ENCODE measurements at regions of chr15 and their contacts with region 1.

Region 1: GRCh38 chr15:47196057-47196456 is 521.2 kb upstream of the SEMA6D start:
- ATAC-seq: peak; percentile 95 to 99 (median 98)
- H3K4me3 ChIP-seq: no peak overlapping the region
- H3K27ac ChIP-seq: no peak overlapping the region
- H3K4me1 ChIP-seq: peaks cover 2 to 15% of the 10 kb centered on the region in 2 donors

Region 2: GRCh38 chr15:45705510-45706473 is 1490.3 kb before region 1 on chr15:
- in situ Hi-C with region 1: loop called in 1 of 9 experiments (anchors 25 kb)
- ATAC-seq: peak; percentile 74 to 92 (median 79)
- H3K4me3 ChIP-seq: peak overlapping the region; percentile 39 to 67 (median 44)
- H3K27ac ChIP-seq: no peak overlapping the region
- H3K4me1 ChIP-seq: no peaks in the 10 kb centered on the region

Region 3: GRCh38 chr15:46312133-46312740 is 883.8 kb before region 1 on chr15:
- in situ Hi-C with region 1: loop called in 2 of 9 experiments (anchors 25 kb)
- ATAC-seq: peak; percentile 80 to 94 (median 88)
- H3K4me3 ChIP-seq: no peak overlapping the region
- H3K27ac ChIP-seq: no peak overlapping the region
- H3K4me1 ChIP-seq: peaks cover 17 to 28% of the 10 kb centered on the region in 2 donors

Region 4: GRCh38 chr15:47484059-47484458 is 288.0 kb after region 1 on chr15:
- in situ Hi-C with region 1: no loop called
- ATAC-seq: no peak
- H3K4me3 ChIP-seq: no peak overlapping the region
- H3K27ac ChIP-seq: no peak overlapping the region
- H3K4me1 ChIP-seq: no peaks in the 10 kb centered on the region

Region 5: DNA sequence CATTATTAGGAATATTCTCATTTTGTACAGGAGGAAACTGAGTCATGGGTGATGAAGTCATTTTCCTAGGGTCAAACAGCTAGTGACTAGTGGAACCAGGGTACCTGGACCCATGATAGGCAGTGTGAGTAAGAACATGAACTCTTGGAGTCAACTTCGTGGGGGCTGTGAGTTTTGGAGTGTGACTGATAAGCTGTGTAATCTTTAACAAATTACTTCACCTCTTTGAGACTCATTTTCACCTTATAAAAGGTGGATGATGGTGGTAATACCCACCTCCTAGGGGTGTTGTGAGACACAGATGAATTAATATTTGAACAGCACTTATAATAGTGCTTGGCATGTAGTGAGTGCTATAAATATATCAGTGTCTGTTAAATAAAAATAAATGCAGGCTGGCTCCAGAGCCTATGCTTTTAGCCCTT is 530.4 kb after region 1 on chr15:
- in situ Hi-C with region 1: loop called in 1 of 9 experiments (anchors 25 kb)
- ATAC-seq: peak in 1 of 8 experiments; percentile 4
- H3K4me3 ChIP-seq: no peak overlapping the region
- H3K27ac ChIP-seq: no peak overlapping the region
- H3K4me1 ChIP-seq: peaks cover 9 to 17% of the 10 kb centered on the region in 2 donors

Region 6: GRCh38 chr15:48250640-48251076 is 1054.6 kb after region 1 on chr15:
- in situ Hi-C with region 1: loop called in 2 of 9 experiments (anchors 25 kb)
- ATAC-seq: peak in 7 of 8 experiments; percentile 43 to 67 (median 51)
- H3K4me3 ChIP-seq: no peak overlapping the region
- H3K27ac ChIP-seq: no peak overlapping the region
- H3K4me1 ChIP-seq: no peaks in the 10 kb centered on the region

Region 7: DNA sequence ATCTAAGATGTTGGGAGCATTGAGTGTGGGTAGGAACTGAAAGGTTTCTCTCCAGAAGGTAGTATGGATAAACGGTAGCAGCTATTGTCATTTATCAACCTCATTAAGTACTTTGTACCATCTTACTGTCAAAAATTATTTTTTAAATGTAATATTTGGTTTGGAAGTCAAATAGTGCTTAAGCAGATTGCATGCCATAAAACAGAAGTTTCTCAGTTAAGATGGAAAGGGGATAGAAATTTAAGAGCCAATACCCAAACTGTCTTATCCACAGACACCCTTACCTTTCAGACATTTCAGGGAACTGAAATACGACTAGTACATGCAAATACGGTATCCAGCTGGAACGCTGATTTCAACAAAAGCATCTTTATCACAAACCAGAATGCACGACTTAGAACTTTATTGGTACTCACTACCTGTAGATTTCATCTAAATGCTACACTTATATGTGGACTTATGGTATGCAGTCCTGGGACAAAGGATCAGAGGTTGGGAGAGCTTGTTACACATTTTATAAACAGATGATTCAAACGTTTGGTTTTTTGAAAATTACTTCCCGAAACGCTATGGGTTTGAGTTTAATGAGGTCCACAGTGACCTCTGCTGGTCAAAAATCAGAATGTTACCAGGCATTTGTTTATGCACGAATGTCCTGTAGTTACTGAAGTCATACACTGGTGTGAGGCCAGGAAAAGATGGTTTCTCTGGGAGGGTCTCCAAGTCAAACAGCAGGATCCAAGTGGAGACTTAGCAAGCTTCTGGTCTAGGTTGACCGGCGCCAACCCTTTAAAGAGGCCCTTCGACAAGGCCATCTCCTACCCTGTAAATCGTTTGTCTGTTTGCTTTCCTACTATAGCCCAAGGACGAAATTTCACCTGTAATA is 1089.5 kb after region 1 on chr15:
- in situ Hi-C with region 1: loop called in 2 of 9 experiments (anchors 10 to 25 kb)
- ATAC-seq: peak; percentile 32 to 92 (median 54)
- H3K4me3 ChIP-seq: peak overlapping the region in 1 of 5 donors; percentile 5
- H3K27ac ChIP-seq: no peak overlapping the region
- H3K4me1 ChIP-seq: peaks cover 28 to 33% of the 10 kb centered on the region in 2 donors